ENCODE measurements at regions of chr11 and their contacts with region 1.

Region 1: GRCh38 chr11:3775736-3776406 is 21.5 kb downstream of the NUP98 start:
- DNase-seq: no peak
- H3K4me3 ChIP-seq: no peak overlapping the region
- H3K27ac ChIP-seq: no peak overlapping the region
- H3K4me1 ChIP-seq: peaks cover 0 to 5% (median 2%) of the 10 kb centered on the region in 6 donors
- H3K27me3 ChIP-seq: no peaks in the 10 kb centered on the region
- CTCF ChIP-seq: no peak
- POLR2A ChIP-seq: no peak

Region 2: GRCh38 chr11:3709977-3710376 is 65.9 kb before region 1 on chr11:
- intact Hi-C with region 1: loop called (anchors 10 kb)
- DNase-seq: no peak
- H3K4me3 ChIP-seq: no peak overlapping the region
- H3K27ac ChIP-seq: no peak overlapping the region
- H3K4me1 ChIP-seq: peaks cover 0 to 5% (median 0%) of the 10 kb centered on the region in 6 donors
- H3K27me3 ChIP-seq: no peaks in the 10 kb centered on the region
- CTCF ChIP-seq: no peak
- POLR2A ChIP-seq: no peak